ENCODE measurements at regions of chr10 and their contacts with region 1.

Region 1: DNA sequence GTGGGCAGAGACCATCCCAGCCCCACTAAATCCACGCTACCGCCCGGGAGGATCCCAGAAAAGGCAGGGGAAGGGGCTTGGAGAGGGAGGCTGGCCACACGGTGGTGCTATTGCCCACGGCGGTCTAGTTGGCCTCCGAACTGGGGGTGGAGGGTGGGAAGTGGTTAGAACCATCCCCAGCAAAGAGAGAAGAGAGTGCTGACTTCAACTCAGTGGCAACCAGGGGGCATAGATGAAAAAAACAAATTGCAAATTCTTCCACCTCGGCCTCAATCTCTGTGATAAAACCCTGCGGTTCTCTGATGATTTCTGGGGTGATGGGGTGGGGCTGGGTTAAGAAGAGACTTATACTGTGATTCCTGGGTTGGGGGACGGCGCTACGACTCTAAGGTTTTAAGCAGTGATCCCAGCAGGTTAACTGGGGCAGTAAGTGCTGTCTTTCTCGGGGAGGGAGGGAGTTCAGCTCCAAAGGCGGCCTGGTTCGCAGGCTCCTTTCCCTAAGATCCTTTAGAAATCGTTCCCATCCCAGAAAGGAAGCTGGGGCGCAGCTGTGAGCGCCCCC is 154.5 kb upstream of the LYZL2 start:
- DNase-seq: peak; percentile 89
- H3K4me3 ChIP-seq: no peak overlapping the region
- H3K27ac ChIP-seq: peak overlapping the region; percentile 92
- H3K4me1 ChIP-seq: peaks cover 40% of the 10 kb centered on the region
- H3K27me3 ChIP-seq: no peaks in the 10 kb centered on the region
- CTCF ChIP-seq: peak; percentile 92
- POLR2A ChIP-seq: peak; percentile 56

Region 2: GRCh38 chr10:30398788-30399187 is 385.2 kb before region 1 on chr10:
- CTCF ChIA-PET with region 1: no interaction called
- POLR2A ChIA-PET with region 1: no interaction called
- dilution Hi-C with region 1: no loop called
- intact Hi-C with region 1: no loop called
- DNase-seq: no peak
- H3K4me3 ChIP-seq: no peak overlapping the region
- H3K27ac ChIP-seq: no peak overlapping the region
- H3K4me1 ChIP-seq: no peaks in the 10 kb centered on the region
- H3K27me3 ChIP-seq: peaks cover 22 to 24% of the 10 kb centered on the region in 2 experiments
- CTCF ChIP-seq: no peak
- POLR2A ChIP-seq: no peak

Region 3: DNA sequence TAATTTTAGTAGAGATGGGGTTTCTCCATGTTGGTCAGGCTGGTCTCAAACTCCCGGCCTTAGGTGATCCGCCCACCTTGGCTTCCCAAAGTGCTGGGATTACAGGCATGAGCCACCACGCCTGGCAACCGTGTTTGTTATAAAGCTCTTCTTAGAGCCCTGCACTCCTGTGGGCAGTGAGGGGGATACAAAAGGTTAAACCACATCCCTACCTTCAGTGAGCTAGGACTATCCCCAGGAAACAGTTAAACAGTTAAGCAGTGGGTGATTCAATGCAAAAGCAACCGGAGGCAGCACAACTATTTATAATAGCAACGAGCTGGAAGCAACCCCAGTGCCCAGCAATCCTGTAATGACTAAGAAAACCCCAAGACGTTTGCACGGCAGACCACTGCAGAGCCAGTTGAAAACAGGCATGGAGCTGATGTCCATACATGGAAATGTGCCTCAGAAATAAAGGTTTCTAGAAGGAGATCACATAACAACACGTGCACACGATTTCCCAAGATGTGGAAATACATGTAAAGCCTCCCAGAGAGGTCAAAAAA is 47.3 kb before region 1 on chr10:
- CTCF ChIA-PET with region 1: interaction called, 4 read pairs
- POLR2A ChIA-PET with region 1: no interaction called
- dilution Hi-C with region 1: no loop called
- intact Hi-C with region 1: loop called (anchors 2 kb)
- DNase-seq: peak; percentile 85
- H3K4me3 ChIP-seq: no peak overlapping the region
- H3K27ac ChIP-seq: peak overlapping the region; percentile 57
- H3K4me1 ChIP-seq: peaks cover 4% of the 10 kb centered on the region
- H3K27me3 ChIP-seq: no peaks in the 10 kb centered on the region
- CTCF ChIP-seq: no peak
- POLR2A ChIP-seq: no peak

Region 4: GRCh38 chr10:30820261-30820991 is 36.4 kb after region 1 on chr10:
- CTCF ChIA-PET with region 1: interaction called, 9 read pairs
- POLR2A ChIA-PET with region 1: no interaction called
- dilution Hi-C with region 1: no loop called
- intact Hi-C with region 1: loop called (anchors 1 kb)
- DNase-seq: peak; percentile 98
- H3K4me3 ChIP-seq: no peak overlapping the region
- H3K27ac ChIP-seq: peak overlapping the region; percentile 94
- H3K4me1 ChIP-seq: peaks cover 48% of the 10 kb centered on the region
- H3K27me3 ChIP-seq: no peaks in the 10 kb centered on the region
- CTCF ChIP-seq: no peak
- POLR2A ChIP-seq: peak; percentile 29

Region 5: GRCh38 chr10:30986053-30986555 is 202.1 kb after region 1 on chr10:
- CTCF ChIA-PET with region 1: interaction called, 16 read pairs
- POLR2A ChIA-PET with region 1: interaction called, 4 read pairs
- dilution Hi-C with region 1: no loop called
- intact Hi-C with region 1: loop called (anchors 1 kb)
- DNase-seq: peak; percentile 69
- H3K4me3 ChIP-seq: no peak overlapping the region
- H3K27ac ChIP-seq: peak overlapping the region; percentile 93
- H3K4me1 ChIP-seq: peaks cover 56% of the 10 kb centered on the region
- H3K27me3 ChIP-seq: no peaks in the 10 kb centered on the region
- CTCF ChIP-seq: no peak
- POLR2A ChIP-seq: no peak

Region 6: DNA sequence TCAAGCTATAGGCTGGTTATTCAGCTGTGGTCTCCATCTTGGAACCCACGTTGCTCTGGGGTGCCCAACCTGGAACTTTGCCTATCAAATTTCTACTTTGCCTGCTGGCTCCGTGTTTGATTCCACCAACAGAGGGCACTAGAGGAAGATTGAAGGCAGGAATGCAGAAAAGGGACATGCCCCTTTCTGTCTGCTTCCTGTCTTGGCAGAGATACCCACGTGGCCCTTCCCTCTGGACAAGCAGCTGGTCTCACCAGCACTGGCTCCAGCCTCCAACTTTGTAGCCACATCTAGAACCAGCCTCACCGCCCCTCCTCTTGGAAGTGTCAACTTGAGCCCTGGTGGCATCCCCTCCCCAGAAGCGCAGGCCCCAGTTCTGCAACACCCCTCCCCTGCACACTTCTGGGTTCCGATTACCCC is 299.8 kb after region 1 on chr10:
- CTCF ChIA-PET with region 1: interaction called, 13 read pairs
- POLR2A ChIA-PET with region 1: no interaction called
- dilution Hi-C with region 1: no loop called
- intact Hi-C with region 1: loop called (anchors 1 kb)
- DNase-seq: peak; percentile 43
- H3K4me3 ChIP-seq: no peak overlapping the region
- H3K27ac ChIP-seq: no peak overlapping the region
- H3K4me1 ChIP-seq: no peaks in the 10 kb centered on the region
- H3K27me3 ChIP-seq: no peaks in the 10 kb centered on the region
- CTCF ChIP-seq: peak; percentile 42 to 54
- POLR2A ChIP-seq: no peak

Region 7: DNA sequence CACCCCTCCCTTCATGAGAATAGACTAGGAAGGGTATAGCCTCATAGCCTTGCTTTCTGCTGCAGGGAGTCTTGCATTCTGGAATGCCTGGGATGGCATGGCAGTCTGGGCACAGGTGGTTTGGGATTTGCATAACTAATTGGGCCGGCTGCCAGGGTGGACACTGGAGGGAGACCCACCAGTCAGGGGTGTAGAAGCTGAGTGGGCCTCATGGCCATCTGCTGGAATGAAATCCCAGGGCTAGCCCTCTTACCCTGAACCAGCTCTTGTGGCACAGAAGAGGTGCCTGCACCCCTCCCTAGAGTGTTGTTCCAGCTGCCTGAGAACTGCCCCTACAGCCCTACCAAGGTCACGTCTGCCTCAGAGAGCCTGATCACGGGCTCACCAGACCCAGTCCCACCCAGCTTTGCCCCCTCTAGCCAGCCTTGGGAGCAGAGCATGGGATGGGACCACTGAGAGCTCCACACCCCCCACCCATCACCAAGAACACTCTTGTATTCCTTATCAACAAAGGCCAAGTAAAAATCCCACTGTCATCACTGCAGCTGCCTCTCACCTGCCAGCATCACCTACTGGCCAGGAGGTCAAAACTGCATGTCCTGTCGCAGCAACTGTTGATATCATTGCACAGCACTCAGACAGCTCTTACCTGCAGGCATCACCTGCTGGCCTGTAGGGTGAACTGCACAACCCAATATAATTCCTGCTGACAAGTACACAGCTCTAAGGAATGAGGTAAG is 683.9 kb after region 1 on chr10:
- CTCF ChIA-PET with region 1: no interaction called
- POLR2A ChIA-PET with region 1: no interaction called
- dilution Hi-C with region 1: no loop called
- intact Hi-C with region 1: loop called (anchors 1 kb)
- DNase-seq: no peak
- H3K4me3 ChIP-seq: no peak overlapping the region
- H3K27ac ChIP-seq: no peak overlapping the region
- H3K4me1 ChIP-seq: no peaks in the 10 kb centered on the region
- H3K27me3 ChIP-seq: no peaks in the 10 kb centered on the region
- CTCF ChIP-seq: peak; percentile 21 to 43
- POLR2A ChIP-seq: no peak

Region 8: GRCh38 chr10:31770307-31770902 is 986.4 kb after region 1 on chr10:
- CTCF ChIA-PET with region 1: interaction called, 12 read pairs
- POLR2A ChIA-PET with region 1: no interaction called
- dilution Hi-C with region 1: no loop called
- intact Hi-C with region 1: no loop called
- DNase-seq: peak; percentile 71
- H3K4me3 ChIP-seq: no peak overlapping the region
- H3K27ac ChIP-seq: no peak overlapping the region
- H3K4me1 ChIP-seq: peaks cover 7% of the 10 kb centered on the region
- H3K27me3 ChIP-seq: no peaks in the 10 kb centered on the region
- CTCF ChIP-seq: peak; percentile 84 to 86
- POLR2A ChIP-seq: no peak